Tibial artery (tissue), 4 donors: ENCODE measurements at regions of chr12 and their contacts with region 1.

Region 1: DNA sequence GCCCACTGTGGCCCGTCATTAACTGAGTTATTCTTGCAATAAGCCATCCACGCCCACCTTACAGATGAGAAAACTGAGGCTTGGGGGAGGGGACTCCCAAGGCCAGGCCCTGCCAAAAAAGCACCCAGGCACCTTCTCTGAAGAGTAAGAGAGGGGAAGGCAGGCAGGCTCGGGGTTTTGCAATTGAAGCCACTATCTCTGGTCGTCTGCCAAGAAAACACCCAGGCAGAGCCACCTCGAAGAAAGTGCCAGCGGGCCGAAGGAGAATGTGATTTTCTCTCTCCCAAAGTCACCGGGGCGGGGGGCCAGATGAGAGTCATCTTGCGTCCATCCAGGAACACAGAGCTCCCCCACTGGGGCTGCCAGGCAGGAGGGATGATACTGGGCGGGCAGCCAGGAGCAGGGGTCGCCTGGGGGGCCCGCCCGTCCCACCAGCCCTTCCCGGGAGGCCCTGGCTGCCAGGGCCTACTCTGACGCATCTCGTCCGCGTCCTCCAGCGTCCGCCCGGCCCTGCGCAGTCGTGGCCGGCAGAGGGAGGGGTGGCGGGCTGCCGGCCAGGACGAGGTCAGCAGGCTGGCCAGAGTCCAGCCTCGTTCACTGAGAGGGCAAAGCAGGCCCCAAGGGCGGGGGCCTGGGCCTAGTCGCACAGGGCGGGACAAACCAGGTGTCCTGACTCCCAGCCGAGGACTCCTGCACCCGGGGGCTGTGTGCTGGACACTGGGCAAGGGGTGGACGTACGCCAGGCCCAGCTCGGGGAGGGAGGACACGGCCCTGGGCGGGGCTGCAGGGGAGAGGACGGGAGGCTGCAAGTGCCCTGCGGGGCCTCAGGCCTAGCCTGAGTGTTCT is 74.4 kb downstream of the RFLNA start:
- DNase-seq: peak; percentile 89 to 99
- H3K4me3 ChIP-seq: peak overlapping the region in 1 of 2 donors; percentile 31
- H3K27ac ChIP-seq: peak overlapping the region; percentile 85 to 90
- H3K4me1 ChIP-seq: peaks cover 18 to 78% (median 44%) of the 10 kb centered on the region in 4 donors
- H3K27me3 ChIP-seq: no peaks in the 10 kb centered on the region
- CTCF ChIP-seq: peak; percentile 63 to 71

Region 2: GRCh38 chr12:124188561-124189405 is 180.5 kb before region 1 on chr12:
- intact Hi-C with region 1: no loop called
- DNase-seq: no peak
- H3K4me3 ChIP-seq: no peak overlapping the region
- H3K27ac ChIP-seq: no peak overlapping the region
- H3K4me1 ChIP-seq: peaks cover 0 to 15% (median 5%) of the 10 kb centered on the region in 4 donors
- H3K27me3 ChIP-seq: no peaks in the 10 kb centered on the region
- CTCF ChIP-seq: no peak

Region 3: GRCh38 chr12:124518051-124518932 is 149.0 kb after region 1 on chr12:
- intact Hi-C with region 1: loop called (anchors 10 kb)
- DNase-seq: peak; percentile 99 to 100
- H3K4me3 ChIP-seq: peak overlapping the region; percentile 50 to 64
- H3K27ac ChIP-seq: peak overlapping the region; percentile 98 to 99
- H3K4me1 ChIP-seq: peaks cover 15 to 90% (median 78%) of the 10 kb centered on the region in 4 donors
- H3K27me3 ChIP-seq: no peaks in the 10 kb centered on the region
- CTCF ChIP-seq: no peak